CD14-positive monocyte (primary cell): ENCODE measurements at regions of chr5 and their contacts with region 1.

Region 1: GRCh38 chr5:83510260-83510659 is 38.7 kb downstream of the VCAN start:
- DNase-seq: no peak
- H3K4me3 ChIP-seq: no peak overlapping the region
- H3K4me3 Mint-ChIP-seq: no peak overlapping the region
- H3K27ac ChIP-seq: peak overlapping the region in 1 of 2 donors; percentile 66
- H3K27ac Mint-ChIP-seq: peak overlapping the region in 3 of 7 donors; percentile 22 to 81 (median 60)
- H3K4me1 ChIP-seq: peaks cover 0 to 4% of the 10 kb centered on the region in 2 donors
- H3K4me1 Mint-ChIP-seq: peaks cover 20% of the 10 kb centered on the region
- H3K27me3 ChIP-seq: no peaks in the 10 kb centered on the region
- H3K27me3 Mint-ChIP-seq: peaks cover 0 to 2% (median 0%) of the 10 kb centered on the region in 3 donors
- CTCF ChIP-seq: no peak

Region 2: DNA sequence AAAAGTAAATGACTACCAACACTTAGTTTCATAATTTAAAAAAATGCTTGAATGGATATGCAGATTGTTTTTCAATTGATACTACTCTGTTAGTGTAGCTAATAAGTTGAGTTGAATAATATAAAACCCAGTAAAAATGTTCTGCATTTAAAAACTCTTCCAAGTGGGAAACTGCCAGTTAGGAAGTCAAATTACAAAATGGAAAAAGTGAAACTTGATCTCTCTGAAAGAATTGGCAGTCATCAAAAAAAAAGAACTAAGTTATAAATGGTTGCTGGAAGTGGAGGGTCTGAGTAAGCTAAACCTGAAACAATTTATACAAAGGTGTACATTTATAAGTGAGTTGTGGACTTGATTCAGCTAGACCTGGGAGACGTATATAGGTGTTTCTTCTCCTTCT is 13.7 kb after region 1 on chr5:
- intact Hi-C with region 1: no loop called
- DNase-seq: no peak
- H3K4me3 ChIP-seq: no peak overlapping the region
- H3K4me3 Mint-ChIP-seq: no peak overlapping the region
- H3K27ac ChIP-seq: peak overlapping the region in 1 of 2 donors; percentile 1
- H3K27ac Mint-ChIP-seq: peak overlapping the region in 3 of 7 donors; percentile 3 to 30 (median 17)
- H3K4me1 ChIP-seq: peaks cover 2 to 4% of the 10 kb centered on the region in 2 donors
- H3K4me1 Mint-ChIP-seq: peaks cover 11% of the 10 kb centered on the region
- H3K27me3 ChIP-seq: no peaks in the 10 kb centered on the region
- H3K27me3 Mint-ChIP-seq: no peaks in the 10 kb centered on the region
- CTCF ChIP-seq: no peak

Region 3: GRCh38 chr5:83564069-83564749 is 53.9 kb after region 1 on chr5:
- intact Hi-C with region 1: loop called in 1 of 2 experiments (anchors 10 kb)
- DNase-seq: peak in 2 of 3 donors; percentile 9 to 13
- H3K4me3 ChIP-seq: no peak overlapping the region
- H3K4me3 Mint-ChIP-seq: no peak overlapping the region
- H3K27ac ChIP-seq: peak overlapping the region in 1 of 2 donors; percentile 6
- H3K27ac Mint-ChIP-seq: peak overlapping the region in 1 of 7 donors; percentile 30
- H3K4me1 ChIP-seq: no peaks in the 10 kb centered on the region
- H3K4me1 Mint-ChIP-seq: no peaks in the 10 kb centered on the region
- H3K27me3 ChIP-seq: no peaks in the 10 kb centered on the region
- H3K27me3 Mint-ChIP-seq: peaks cover 0 to 2% (median 0%) of the 10 kb centered on the region in 3 donors
- CTCF ChIP-seq: peak; percentile 74